CD4-positive, alpha-beta memory T cell (primary cell): ENCODE measurements at regions of chr1 and their contacts with region 1.

Region 1: GRCh38 chr1:169601093-169601881 is 15.0 kb upstream of the F5 start:
- DNase-seq: peak in 4 of 5 donors; percentile 21 to 34 (median 30)
- H3K4me3 ChIP-seq: no peak overlapping the region
- H3K4me3 Mint-ChIP-seq: peak overlapping the region in 4 of 8 donors; percentile 15 to 66 (median 20)
- H3K27ac ChIP-seq: no peak overlapping the region
- H3K27ac Mint-ChIP-seq: peak overlapping the region; percentile 39 to 86 (median 67)
- H3K4me1 ChIP-seq: peaks cover 53% of the 10 kb centered on the region
- H3K4me1 Mint-ChIP-seq: peaks cover 38 to 58% (median 49%) of the 10 kb centered on the region in 4 donors
- H3K27me3 ChIP-seq: no peaks in the 10 kb centered on the region
- H3K27me3 Mint-ChIP-seq: no peaks in the 10 kb centered on the region

Region 2: GRCh38 chr1:169538998-169539871 is 62.1 kb before region 1 on chr1:
- CTCF ChIA-PET with region 1: no interaction called
- POLR2A ChIA-PET with region 1: no interaction called
- intact Hi-C with region 1: no loop called
- DNase-seq: no peak
- H3K4me3 ChIP-seq: no peak overlapping the region
- H3K4me3 Mint-ChIP-seq: no peak overlapping the region
- H3K27ac ChIP-seq: no peak overlapping the region
- H3K27ac Mint-ChIP-seq: no peak overlapping the region
- H3K4me1 ChIP-seq: no peaks in the 10 kb centered on the region
- H3K4me1 Mint-ChIP-seq: no peaks in the 10 kb centered on the region
- H3K27me3 ChIP-seq: no peaks in the 10 kb centered on the region
- H3K27me3 Mint-ChIP-seq: peaks cover 0 to 2% of the 10 kb centered on the region in 2 donors

Region 3: GRCh38 chr1:169586395-169587255 is 14.7 kb before region 1 on chr1 and contains the start of gene F5:
- CTCF ChIA-PET with region 1: interaction called, 47 read pairs
- POLR2A ChIA-PET with region 1: interaction called, 16 read pairs
- intact Hi-C with region 1: loop called (anchors 1 kb)
- DNase-seq: peak; percentile 67 to 78 (median 72)
- H3K4me3 ChIP-seq: peak within 1 kb of the TSS; percentile 47 to 62
- H3K4me3 Mint-ChIP-seq: peak within 1 kb of the TSS; percentile 86 to 94 (median 89)
- H3K27ac ChIP-seq: peak within 1 kb of the TSS; percentile 36
- H3K27ac Mint-ChIP-seq: peak within 1 kb of the TSS; percentile 58 to 95 (median 74)
- H3K4me1 ChIP-seq: peaks cover 52% of the 10 kb centered on the region
- H3K4me1 Mint-ChIP-seq: peaks cover 15 to 51% (median 37%) of the 10 kb centered on the region in 4 donors
- H3K27me3 ChIP-seq: no peaks in the 10 kb centered on the region
- H3K27me3 Mint-ChIP-seq: peaks cover 2 to 11% of the 10 kb centered on the region in 2 donors
- total RNA-seq, gene F5: 4.9 to 6.1 TPM

Region 4: DNA sequence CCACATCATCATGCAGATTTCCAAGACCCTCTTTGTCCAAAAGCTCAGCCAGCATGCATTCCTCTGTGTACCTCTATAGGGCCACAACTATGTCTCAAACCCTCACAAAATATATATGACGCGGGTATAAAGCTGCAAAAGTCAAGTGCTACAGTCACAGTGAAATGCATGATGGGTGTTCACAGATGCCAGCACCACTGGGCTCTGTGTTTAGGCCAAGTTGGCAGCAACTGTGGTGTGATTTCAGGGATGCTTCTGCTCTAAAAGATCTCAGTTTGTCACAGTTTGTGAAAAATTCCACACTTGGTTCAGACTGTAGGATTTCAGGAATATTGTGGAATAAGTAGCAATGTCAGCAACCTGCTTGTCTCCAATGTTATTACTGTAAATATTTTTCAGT is 52.6 kb after region 1 on chr1:
- CTCF ChIA-PET with region 1: interaction called, 27 read pairs
- POLR2A ChIA-PET with region 1: interaction called, 11 read pairs
- intact Hi-C with region 1: loop called (anchors 2 kb)
- DNase-seq: no peak
- H3K4me3 ChIP-seq: no peak overlapping the region
- H3K4me3 Mint-ChIP-seq: no peak overlapping the region
- H3K27ac ChIP-seq: no peak overlapping the region
- H3K27ac Mint-ChIP-seq: no peak overlapping the region
- H3K4me1 ChIP-seq: peaks cover 52% of the 10 kb centered on the region
- H3K4me1 Mint-ChIP-seq: peaks cover 53 to 79% (median 69%) of the 10 kb centered on the region in 4 donors
- H3K27me3 ChIP-seq: no peaks in the 10 kb centered on the region
- H3K27me3 Mint-ChIP-seq: no peaks in the 10 kb centered on the region

Region 5: DNA sequence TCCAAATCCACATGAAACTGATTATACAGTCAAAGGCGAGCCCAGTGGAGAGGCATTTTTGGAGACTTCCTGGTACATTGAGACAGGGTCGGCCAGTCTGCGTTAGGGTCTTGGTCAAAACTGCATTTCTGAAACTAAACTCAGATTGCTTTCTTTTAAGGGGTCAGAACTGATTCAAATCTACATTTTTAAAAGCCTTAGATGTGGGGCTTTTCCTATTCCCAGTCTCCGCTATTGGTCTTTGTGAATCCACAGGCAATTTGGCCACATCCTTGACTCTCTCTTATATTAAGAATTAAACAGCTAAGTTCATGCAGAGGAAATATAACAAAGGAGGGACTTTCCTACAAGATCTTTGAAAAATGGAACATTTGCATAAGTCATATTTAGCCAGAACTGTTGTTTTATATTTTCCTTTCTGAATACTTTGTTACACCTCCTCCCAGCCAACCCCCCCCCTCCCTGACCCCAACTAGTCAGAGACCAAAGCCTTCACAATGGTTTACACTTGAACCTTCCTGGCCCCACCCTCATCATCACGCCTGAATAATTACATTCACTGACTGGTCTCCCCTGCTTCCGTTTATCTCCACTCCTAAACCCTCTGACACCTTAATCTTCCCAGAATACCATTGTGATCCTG is 79.2 kb after region 1 on chr1:
- CTCF ChIA-PET with region 1: interaction called, 19 read pairs
- POLR2A ChIA-PET with region 1: interaction called, 5 read pairs
- intact Hi-C with region 1: no loop called
- DNase-seq: peak in 1 of 5 donors; percentile 53
- H3K4me3 ChIP-seq: no peak overlapping the region
- H3K4me3 Mint-ChIP-seq: peak overlapping the region; percentile 12 to 78 (median 65)
- H3K27ac ChIP-seq: no peak overlapping the region
- H3K27ac Mint-ChIP-seq: peak overlapping the region; percentile 22 to 90 (median 49)
- H3K4me1 ChIP-seq: peaks cover 62% of the 10 kb centered on the region
- H3K4me1 Mint-ChIP-seq: peaks cover 43 to 61% (median 52%) of the 10 kb centered on the region in 4 donors
- H3K27me3 ChIP-seq: no peaks in the 10 kb centered on the region
- H3K27me3 Mint-ChIP-seq: no peaks in the 10 kb centered on the region

Region 6: DNA sequence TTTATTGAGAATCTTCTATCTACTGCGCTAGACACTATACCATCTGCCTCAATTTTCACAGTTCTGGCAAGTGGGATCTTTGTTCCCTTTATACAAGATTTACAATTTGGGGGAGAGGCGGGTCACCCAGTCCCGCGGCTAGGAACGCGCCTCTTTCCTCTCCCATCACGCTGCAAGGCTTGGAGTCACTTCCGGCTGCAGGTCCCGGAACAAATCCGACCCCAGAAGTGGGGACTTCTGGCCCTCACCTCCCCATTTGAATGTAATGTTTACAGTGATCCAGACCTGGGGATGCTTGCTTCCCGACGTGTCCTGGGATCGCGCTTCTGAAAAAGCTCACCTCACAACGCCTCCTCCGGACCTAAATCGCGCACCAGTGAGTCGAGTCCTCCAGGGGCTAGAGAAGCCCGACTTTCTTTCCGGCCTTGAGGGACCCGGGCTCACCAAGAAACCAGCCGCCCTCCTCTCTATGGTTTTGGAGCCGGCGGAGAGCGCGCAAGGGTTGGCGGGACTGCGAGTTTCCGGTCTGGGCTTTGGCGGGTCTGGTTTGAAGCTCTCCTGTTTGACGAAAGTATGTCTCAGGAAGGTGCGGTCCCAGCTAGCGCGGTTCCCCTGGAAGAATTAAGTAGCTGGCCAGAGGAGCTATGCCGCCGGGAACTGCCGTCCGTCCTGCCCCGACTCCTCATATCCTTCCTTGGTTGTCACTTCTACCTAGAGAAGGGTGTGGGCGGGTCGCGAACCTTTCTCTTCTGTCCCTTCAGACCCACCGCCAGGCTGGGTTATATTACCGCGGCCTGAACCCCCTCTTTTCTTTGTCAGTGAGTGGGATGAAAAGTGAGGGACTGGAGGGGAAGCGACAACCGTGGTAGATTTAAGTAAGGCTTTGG is 193.5 kb after region 1 on chr1 and contains the start of gene METTL18:
- CTCF ChIA-PET with region 1: interaction called, 9 read pairs
- POLR2A ChIA-PET with region 1: interaction called, 8 read pairs
- intact Hi-C with region 1: loop called (anchors 2 kb)
- DNase-seq: peak; percentile 92 to 95 (median 93)
- H3K4me3 ChIP-seq: peak within 1 kb of the TSS; percentile 90 to 93
- H3K4me3 Mint-ChIP-seq: peak within 1 kb of the TSS; percentile 96 to 100 (median 98)
- H3K27ac ChIP-seq: peak within 1 kb of the TSS; percentile 93
- H3K27ac Mint-ChIP-seq: peak within 1 kb of the TSS; percentile 90 to 100 (median 99)
- H3K4me1 ChIP-seq: peaks cover 30% of the 10 kb centered on the region
- H3K4me1 Mint-ChIP-seq: peaks cover 36 to 56% (median 48%) of the 10 kb centered on the region in 4 donors
- H3K27me3 ChIP-seq: no peaks in the 10 kb centered on the region
- H3K27me3 Mint-ChIP-seq: no peaks in the 10 kb centered on the region
- total RNA-seq, gene METTL18: 21.0 to 23.8 TPM